PC-9 (cell line): ENCODE measurements at regions of chr7 and their contacts with region 1.

Region 1: DNA sequence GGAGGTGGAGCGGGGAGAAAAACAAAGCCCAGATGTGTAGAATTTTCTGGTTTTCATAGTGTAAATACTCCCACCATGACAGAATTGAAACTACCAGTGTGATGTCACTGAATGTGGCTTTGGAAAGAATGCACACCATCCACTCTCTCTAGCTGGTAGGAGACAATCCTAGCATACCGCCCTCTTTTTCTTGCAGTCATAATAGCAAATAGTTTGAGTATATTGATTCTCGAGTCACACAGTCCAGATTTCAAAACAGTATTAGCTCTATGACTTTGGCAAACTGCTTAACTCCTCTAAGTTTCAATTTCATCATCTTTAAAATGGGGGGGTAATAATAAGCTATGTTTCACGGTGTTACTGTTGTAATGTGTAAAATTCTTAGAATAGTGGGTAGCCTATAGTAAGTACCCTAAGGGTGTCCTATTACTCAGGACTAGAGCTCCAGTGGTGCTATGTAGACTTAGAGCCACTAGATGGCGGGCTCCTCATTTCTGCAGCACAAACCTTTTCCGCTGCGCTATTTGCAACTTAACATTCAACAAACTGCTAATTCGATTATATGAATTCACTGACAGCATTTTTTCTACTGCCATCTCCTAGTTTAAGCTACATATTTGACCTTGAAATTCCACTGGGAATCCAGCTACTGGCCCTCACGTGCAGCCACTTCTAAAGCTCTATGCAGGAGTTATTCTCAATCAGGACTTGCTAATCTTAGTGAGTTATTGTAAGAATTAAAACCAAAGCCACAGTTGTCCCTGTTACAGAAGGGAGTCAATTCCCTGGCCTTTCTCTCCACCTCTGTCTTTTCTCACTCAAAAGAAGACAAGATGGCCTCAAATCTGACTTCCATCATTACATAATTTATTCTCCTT is 18.7 kb downstream of the TAS2R40 start:
- DNase-seq: peak; percentile 71 to 84
- H3K4me3 ChIP-seq: peak overlapping the region; percentile 11; the same call in 1 of the 2 replicates
- H3K27ac ChIP-seq: peak overlapping the region; percentile 80
- H3K4me1 ChIP-seq: peaks cover 54% of the 10 kb centered on the region
- H3K27me3 ChIP-seq: no peaks in the 10 kb centered on the region
- CTCF ChIP-seq: peak; percentile 98

Region 2: DNA sequence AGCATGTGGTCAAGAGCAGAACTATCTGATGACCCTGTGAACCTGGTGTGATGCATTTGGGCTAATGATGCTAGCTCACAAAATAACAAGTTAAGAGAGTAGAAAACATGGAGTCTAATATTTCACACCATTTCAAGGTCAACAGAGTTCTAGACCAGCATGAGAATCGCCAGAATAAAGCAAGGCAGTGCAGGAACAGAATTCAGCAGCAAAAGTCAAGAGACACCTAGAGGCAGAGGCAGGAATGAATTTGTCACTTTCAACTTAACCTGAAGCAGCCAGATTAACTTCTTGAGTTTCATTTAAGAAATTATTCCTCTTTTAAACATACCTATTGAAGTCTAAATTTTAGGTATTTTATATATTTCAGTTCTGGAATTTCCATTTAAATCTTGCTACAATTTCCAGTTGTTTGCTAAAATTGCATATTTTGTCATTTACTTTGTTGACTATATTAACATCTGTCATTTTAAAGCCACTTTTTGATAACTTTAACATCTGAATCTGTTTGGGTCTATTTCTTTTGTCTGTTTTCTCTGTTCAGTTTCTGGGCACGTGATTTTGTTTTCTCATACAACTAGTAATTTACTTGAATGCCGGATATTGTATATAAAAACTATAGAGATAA is 938.5 kb before region 1 on chr7:
- CTCF ChIA-PET with region 1: no interaction called
- POLR2A ChIA-PET with region 1: interaction called, 27 read pairs
- intact Hi-C with region 1: no loop called
- DNase-seq: no peak
- H3K4me3 ChIP-seq: no peak overlapping the region
- H3K27ac ChIP-seq: no peak overlapping the region
- H3K4me1 ChIP-seq: no peaks in the 10 kb centered on the region
- H3K27me3 ChIP-seq: no peaks in the 10 kb centered on the region
- CTCF ChIP-seq: 0 out of 2 replicates have a peak, but pooled peaks have one; percentile 35

Region 3: DNA sequence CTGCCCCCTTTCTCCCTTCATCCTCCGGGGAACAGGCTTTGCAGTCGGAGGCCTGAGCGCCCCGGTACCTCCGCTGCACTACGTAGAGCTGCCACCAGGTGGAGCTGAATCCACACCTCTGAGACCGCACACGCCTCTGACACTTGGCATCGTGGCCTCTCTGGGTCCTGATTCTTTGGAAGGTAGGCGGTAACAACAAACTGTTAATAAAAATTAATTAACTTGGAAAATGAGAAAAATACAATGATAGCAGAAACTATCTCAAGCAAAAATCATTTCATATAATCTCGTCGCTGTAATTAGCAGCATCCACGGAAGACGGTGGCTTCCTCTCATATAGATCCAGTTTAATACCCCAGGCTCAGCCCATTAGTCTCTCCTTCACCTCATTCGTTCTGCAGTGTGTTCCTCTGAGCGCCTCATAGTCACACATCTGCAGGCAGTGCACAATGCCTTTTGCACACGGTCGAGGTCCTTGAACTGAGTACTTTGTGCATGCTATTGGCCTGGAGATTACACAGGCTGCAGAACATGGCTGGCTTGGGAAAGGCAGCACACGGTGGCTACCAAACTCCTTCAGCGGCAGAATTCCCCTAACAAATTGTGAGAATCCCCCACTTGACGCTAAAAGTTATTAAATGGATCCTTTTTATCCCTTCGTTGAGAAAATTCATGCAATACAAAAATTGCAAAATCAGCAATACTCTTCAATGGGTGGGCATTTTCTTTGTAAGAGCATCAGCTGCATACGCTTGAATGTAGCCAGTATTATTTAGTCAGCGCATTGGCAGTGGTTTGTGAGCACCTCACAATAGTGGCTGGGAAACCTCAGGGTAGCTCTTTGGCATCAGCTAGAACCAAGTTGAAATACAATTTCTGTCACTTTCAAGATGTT is 232.3 kb before region 1 on chr7:
- CTCF ChIA-PET with region 1: no interaction called
- POLR2A ChIA-PET with region 1: no interaction called
- intact Hi-C with region 1: no loop called
- DNase-seq: peak; percentile 55 to 80
- H3K4me3 ChIP-seq: no peak overlapping the region
- H3K27ac ChIP-seq: no peak overlapping the region
- H3K4me1 ChIP-seq: peaks cover 1% of the 10 kb centered on the region; the same call in 1 of the 2 replicates
- H3K27me3 ChIP-seq: no peaks in the 10 kb centered on the region
- CTCF ChIP-seq: peak; percentile 99

Region 4: GRCh38 chr7:143287935-143288826 is 47.7 kb after region 1 on chr7 and contains the start of gene CASP2:
- CTCF ChIA-PET with region 1: interaction called, 8 read pairs
- POLR2A ChIA-PET with region 1: interaction called, 30 read pairs
- intact Hi-C with region 1: loop called (anchors 1 kb)
- DNase-seq: peak; percentile 90 to 98
- H3K4me3 ChIP-seq: peak within 1 kb of the TSS; percentile 77
- H3K27ac ChIP-seq: peak within 1 kb of the TSS; percentile 55
- H3K4me1 ChIP-seq: peaks cover 60% of the 10 kb centered on the region
- H3K27me3 ChIP-seq: no peaks in the 10 kb centered on the region
- CTCF ChIP-seq: no peak; the same call in 1 of the 2 replicates
- total RNA-seq, gene CASP2: 52.7 and 67.2 TPM in 2 replicates

Region 5: DNA sequence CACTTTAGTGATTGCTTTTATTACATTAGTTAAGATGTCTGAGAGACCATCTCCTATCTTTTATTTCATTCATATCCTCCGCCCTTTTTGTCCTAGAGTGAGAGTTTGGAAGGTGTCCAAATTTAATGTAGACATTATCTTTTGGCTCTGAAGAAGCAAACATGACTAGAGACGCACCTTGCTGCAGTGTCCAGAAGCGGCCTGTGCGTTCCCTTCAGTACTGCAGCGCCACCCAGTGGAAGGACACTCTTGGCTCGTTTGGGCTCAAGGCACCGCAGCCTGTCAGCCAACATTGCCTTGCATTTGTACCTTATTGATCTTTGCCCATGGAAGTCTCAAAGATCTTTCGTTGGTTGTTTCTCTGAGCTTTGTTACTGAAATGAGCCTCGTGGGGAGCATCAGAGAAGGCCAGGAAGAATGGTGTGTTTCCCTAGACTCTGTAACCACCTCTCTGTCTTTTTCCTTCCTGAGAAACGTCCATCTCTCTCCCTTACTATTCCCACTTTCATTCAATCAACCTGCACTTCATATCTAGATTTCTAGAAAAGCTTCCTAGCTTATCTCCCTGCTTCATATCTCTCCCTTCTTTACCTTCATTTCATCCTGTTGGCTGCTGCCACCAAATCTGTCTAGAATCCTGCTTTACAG is 65.0 kb after region 1 on chr7:
- CTCF ChIA-PET with region 1: interaction called, 4 read pairs
- POLR2A ChIA-PET with region 1: interaction called, 10 read pairs
- intact Hi-C with region 1: loop called (anchors 1 kb)
- DNase-seq: peak in 1 of 2 experiments; percentile 72
- H3K4me3 ChIP-seq: no peak overlapping the region
- H3K27ac ChIP-seq: no peak overlapping the region
- H3K4me1 ChIP-seq: no peaks in the 10 kb centered on the region
- H3K27me3 ChIP-seq: no peaks in the 10 kb centered on the region
- CTCF ChIP-seq: peak; percentile 91

Region 6: GRCh38 chr7:143408686-143409561 is 168.4 kb after region 1 on chr7 and contains the start of gene EPHA1:
- CTCF ChIA-PET with region 1: no interaction called
- POLR2A ChIA-PET with region 1: interaction called, 4 read pairs
- intact Hi-C with region 1: loop called (anchors 2 kb)
- DNase-seq: peak; percentile 76 to 89
- H3K4me3 ChIP-seq: peak within 1 kb of the TSS; percentile 96
- H3K27ac ChIP-seq: peak within 1 kb of the TSS; percentile 33
- H3K4me1 ChIP-seq: peaks cover 23% of the 10 kb centered on the region
- H3K27me3 ChIP-seq: no peaks in the 10 kb centered on the region
- CTCF ChIP-seq: peak; percentile 83
- total RNA-seq, gene EPHA1: 35.5 and 39.3 TPM in 2 replicates

Region 7: DNA sequence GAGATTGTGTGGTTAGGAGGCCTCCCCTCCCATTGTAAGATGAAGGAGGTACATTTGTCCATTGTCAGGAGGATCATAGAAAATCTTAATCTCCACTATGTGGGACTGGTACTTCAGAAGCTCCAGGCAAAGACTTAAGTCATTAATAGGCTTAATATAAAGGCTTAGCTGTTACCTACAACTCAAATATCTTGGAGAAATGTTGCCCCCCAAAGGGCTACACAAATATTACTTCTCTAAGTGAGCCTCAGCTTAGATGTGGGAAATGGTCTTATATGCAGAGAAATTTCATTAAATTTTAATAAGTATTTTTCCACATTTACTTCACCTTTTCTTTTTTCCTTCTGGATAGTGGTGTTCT is 264.4 kb after region 1 on chr7:
- CTCF ChIA-PET with region 1: no interaction called
- POLR2A ChIA-PET with region 1: no interaction called
- intact Hi-C with region 1: loop called (anchors 10 kb)
- DNase-seq: no peak
- H3K4me3 ChIP-seq: no peak overlapping the region
- H3K27ac ChIP-seq: no peak overlapping the region
- H3K4me1 ChIP-seq: no peaks in the 10 kb centered on the region
- H3K27me3 ChIP-seq: no peaks in the 10 kb centered on the region
- CTCF ChIP-seq: 0 out of 2 replicates have a peak, but pooled peaks have one; percentile 29

Region 8: GRCh38 chr7:145009876-145010275 is 1769.3 kb after region 1 on chr7:
- CTCF ChIA-PET with region 1: no interaction called
- POLR2A ChIA-PET with region 1: no interaction called
- intact Hi-C with region 1: no loop called
- DNase-seq: no peak
- H3K4me3 ChIP-seq: no peak overlapping the region
- H3K27ac ChIP-seq: no peak overlapping the region
- H3K4me1 ChIP-seq: no peaks in the 10 kb centered on the region
- H3K27me3 ChIP-seq: no peaks in the 10 kb centered on the region
- CTCF ChIP-seq: no peak